CD8-positive, alpha-beta T cell (primary cell): ENCODE measurements at regions of chr12 and their contacts with region 1.

Region 1: GRCh38 chr12:123232807-123233543 is at the starts of genes MPHOSPH9 and MTRFR:
- DNase-seq: peak; percentile 96 to 100 (median 98)
- ATAC-seq: peak; percentile 90
- H3K4me3 ChIP-seq: peak within 1 kb of the TSS; percentile 98 to 99
- H3K4me3 Mint-ChIP-seq: peak within 1 kb of the TSS; percentile 94
- H3K27ac ChIP-seq: peak within 1 kb of the TSS; percentile 91 to 94
- H3K27ac Mint-ChIP-seq: peak within 1 kb of the TSS; percentile 100
- H3K4me1 ChIP-seq: peaks cover 80% of the 10 kb centered on the region
- H3K4me1 Mint-ChIP-seq: peaks cover 74% of the 10 kb centered on the region
- H3K27me3 ChIP-seq: no peaks in the 10 kb centered on the region
- H3K27me3 Mint-ChIP-seq: no peaks in the 10 kb centered on the region
- CTCF ChIP-seq: no peak
- total RNA-seq, gene MPHOSPH9: 82.2 to 84.4 TPM
- total RNA-seq, gene MTRFR: 37.7 to 39.4 TPM

Region 2: DNA sequence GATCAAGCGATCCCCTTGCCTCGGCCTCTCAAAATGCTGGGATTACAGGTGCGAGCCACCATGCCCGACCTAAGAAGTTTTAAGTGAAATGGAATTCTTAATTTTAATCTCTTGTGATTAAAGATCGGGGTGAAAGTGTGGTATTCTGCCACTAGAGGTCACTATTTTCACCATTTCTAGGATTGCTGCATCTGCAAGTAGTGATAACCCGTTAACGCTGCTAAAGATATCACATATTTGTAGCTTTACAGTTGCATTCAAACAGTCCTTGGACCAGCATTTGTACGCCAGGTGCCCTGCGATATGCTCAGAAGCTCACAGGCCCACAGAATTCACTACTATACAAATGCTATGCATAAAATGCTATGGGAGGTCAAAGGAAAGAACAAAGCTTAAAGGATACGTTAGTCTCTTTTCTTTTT is 439.3 kb before region 1 on chr12:
- CTCF ChIA-PET with region 1: interaction called, 5 read pairs
- POLR2A ChIA-PET with region 1: no interaction called
- intact Hi-C with region 1: loop called (anchors 5 kb)
- DNase-seq: peak in 4 of 9 experiments; percentile 10 to 74 (median 58)
- ATAC-seq: peak; percentile 62
- H3K4me3 ChIP-seq: no peak overlapping the region
- H3K4me3 Mint-ChIP-seq: no peak overlapping the region
- H3K27ac ChIP-seq: no peak overlapping the region
- H3K27ac Mint-ChIP-seq: no peak overlapping the region
- H3K4me1 ChIP-seq: no peaks in the 10 kb centered on the region
- H3K4me1 Mint-ChIP-seq: peaks cover 3% of the 10 kb centered on the region
- H3K27me3 ChIP-seq: no peaks in the 10 kb centered on the region
- H3K27me3 Mint-ChIP-seq: no peaks in the 10 kb centered on the region
- CTCF ChIP-seq: peak; percentile 80

Region 3: GRCh38 chr12:122974274-122974891 is 258.6 kb before region 1 on chr12:
- CTCF ChIA-PET with region 1: interaction called, 3 read pairs
- POLR2A ChIA-PET with region 1: interaction called, 32 read pairs
- intact Hi-C with region 1: loop called in 1 of 2 experiments (anchors 2 kb)
- DNase-seq: peak; percentile 97 to 100 (median 99)
- ATAC-seq: peak; percentile 85
- H3K4me3 ChIP-seq: peak overlapping the region; percentile 91 to 93
- H3K4me3 Mint-ChIP-seq: peak overlapping the region; percentile 98
- H3K27ac ChIP-seq: peak overlapping the region; percentile 93 to 97
- H3K27ac Mint-ChIP-seq: peak overlapping the region; percentile 98
- H3K4me1 ChIP-seq: peaks cover 26% of the 10 kb centered on the region
- H3K4me1 Mint-ChIP-seq: peaks cover 31% of the 10 kb centered on the region
- H3K27me3 ChIP-seq: no peaks in the 10 kb centered on the region
- H3K27me3 Mint-ChIP-seq: no peaks in the 10 kb centered on the region
- CTCF ChIP-seq: no peak

Region 4: DNA sequence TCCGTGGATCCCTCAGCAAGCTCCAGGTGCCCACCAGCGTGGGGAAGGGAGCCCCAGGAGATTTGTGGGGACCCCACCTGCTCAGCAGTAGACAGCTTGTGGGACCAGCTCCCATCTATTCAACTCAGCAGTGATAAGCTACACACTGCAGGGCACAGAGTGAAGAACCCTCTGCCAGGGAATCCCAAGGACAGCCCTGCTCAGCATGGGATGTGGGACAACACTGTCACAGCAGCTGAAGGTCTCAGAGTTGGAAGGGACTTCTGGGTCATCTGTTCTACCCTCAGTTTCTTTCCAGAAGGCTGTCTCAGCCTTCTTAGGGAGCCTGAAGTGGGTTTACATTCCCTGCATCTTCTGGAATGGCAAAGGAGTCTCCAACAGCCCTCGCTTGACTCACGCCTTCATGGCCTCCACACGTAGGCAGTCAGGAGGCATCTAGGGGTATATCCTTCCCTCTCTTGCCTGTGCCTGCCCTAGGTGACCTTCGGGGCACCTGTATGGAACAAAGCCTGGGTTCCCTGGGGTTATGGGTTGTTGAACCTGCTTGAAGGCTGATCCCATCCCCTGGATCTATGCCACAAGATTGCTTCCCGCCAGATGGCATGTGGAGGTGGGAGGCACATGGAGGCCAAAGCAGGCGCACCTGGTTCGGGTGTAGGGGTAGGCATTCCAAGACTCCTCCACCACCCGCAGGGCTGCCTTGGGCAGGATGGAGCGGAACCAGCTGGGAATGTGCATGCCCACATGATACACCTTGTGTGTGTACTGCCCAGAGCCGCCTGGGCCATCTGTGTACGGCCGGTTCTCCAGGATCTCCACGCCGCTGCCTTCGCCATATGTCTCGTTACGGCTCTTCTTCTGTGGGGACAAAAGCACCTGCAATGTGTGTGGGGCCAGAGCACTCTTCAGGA is 219.5 kb before region 1 on chr12:
- CTCF ChIA-PET with region 1: no interaction called
- POLR2A ChIA-PET with region 1: no interaction called
- intact Hi-C with region 1: no loop called
- DNase-seq: no peak
- ATAC-seq: no peak
- H3K4me3 ChIP-seq: no peak overlapping the region
- H3K4me3 Mint-ChIP-seq: no peak overlapping the region
- H3K27ac ChIP-seq: no peak overlapping the region
- H3K27ac Mint-ChIP-seq: no peak overlapping the region
- H3K4me1 ChIP-seq: no peaks in the 10 kb centered on the region
- H3K4me1 Mint-ChIP-seq: peaks cover 5% of the 10 kb centered on the region
- H3K27me3 ChIP-seq: no peaks in the 10 kb centered on the region
- H3K27me3 Mint-ChIP-seq: no peaks in the 10 kb centered on the region
- CTCF ChIP-seq: no peak

Region 5: DNA sequence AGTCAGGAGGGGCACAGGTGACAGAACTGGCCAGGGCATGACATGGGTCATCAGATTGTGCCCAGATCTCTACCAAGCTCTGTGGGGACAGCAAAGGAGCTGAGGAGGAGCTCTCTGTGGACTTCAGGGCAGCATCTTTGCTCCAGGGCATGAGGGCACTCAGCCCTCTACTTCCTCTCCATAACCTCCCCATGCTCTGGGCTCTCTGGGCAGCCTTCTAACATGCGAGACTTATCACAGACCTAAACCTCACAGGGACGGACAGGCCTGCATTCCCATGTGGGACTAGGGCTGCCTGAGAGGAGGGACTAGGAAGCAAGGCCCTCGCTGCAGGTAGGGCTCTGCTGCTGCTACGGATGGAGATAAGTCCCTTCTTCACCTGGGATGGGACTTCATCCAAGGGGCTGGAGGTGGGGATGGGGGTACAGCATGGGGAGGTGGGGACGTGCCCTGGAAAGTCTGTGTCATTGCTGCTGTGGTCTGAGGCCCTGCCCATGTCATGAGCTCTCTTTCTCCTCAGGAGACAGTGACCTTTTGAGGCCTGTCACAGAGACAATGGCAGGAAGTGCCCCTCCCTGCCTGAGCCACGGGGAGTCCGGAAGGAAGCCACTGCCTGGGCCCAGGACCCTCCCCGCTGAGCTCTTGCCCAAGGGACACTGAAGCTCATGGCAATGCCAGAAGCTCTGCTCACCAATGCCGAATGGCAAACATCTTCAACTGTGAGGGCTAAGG is 126.2 kb before region 1 on chr12:
- CTCF ChIA-PET with region 1: interaction called, 7 read pairs
- POLR2A ChIA-PET with region 1: interaction called, 11 read pairs
- intact Hi-C with region 1: no loop called
- DNase-seq: peak in 8 of 9 experiments; percentile 48 to 81 (median 60)
- ATAC-seq: peak; percentile 86
- H3K4me3 ChIP-seq: peak overlapping the region; percentile 0 to 26
- H3K4me3 Mint-ChIP-seq: peak overlapping the region; percentile 66
- H3K27ac ChIP-seq: peak overlapping the region; percentile 52 to 82
- H3K27ac Mint-ChIP-seq: peak overlapping the region; percentile 98
- H3K4me1 ChIP-seq: peaks cover 53% of the 10 kb centered on the region
- H3K4me1 Mint-ChIP-seq: peaks cover 72% of the 10 kb centered on the region
- H3K27me3 ChIP-seq: no peaks in the 10 kb centered on the region
- H3K27me3 Mint-ChIP-seq: no peaks in the 10 kb centered on the region
- CTCF ChIP-seq: no peak

Region 6: DNA sequence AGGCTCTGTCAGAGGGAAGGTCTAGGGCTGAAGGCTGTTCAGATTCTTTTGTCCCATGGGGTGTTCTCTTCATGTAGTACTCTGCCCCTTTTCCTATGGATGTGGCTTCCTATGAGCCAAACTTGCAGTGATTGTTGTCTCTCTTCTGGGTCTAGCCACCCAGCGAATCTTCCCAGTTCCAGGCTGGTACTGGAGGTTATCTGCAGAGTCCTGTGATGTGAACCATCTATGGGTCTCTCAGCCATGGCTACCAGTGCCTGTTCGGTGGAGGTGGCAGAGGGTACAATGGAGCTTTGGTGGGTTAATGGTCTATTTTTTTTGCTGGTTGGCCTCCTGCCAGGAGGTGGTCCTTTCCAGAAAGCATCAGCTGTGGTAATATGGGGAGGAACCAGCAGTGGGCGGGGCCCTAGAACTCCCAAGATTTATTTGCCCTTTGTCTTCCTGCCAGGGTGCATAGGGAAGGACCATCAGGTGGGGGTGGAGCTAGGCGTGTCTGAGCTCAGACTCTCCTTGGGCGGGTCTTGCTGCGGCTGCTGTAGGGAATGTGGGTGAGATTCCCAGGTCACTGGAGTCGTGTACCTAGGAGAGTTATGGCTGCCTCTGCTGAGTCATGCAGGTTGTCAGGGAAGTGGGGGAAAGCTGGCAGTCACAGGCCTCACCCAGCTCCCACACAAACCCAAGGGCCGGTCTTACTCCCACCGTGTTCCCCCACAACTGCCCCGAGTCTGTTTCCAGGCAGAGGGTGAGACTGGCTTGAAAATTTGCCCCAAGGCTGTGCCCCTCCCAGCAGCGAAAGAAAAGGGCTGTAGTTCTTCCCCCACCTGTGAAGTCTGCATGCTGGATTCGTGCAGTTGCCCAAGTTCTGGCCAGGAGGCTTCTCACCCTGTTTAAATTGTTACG is 17.8 kb after region 1 on chr12:
- CTCF ChIA-PET with region 1: interaction called, 3 read pairs
- POLR2A ChIA-PET with region 1: interaction called, 15 read pairs
- intact Hi-C with region 1: no loop called
- DNase-seq: no peak
- ATAC-seq: no peak
- H3K4me3 ChIP-seq: no peak overlapping the region
- H3K4me3 Mint-ChIP-seq: no peak overlapping the region
- H3K27ac ChIP-seq: no peak overlapping the region
- H3K27ac Mint-ChIP-seq: peak overlapping the region; percentile 79
- H3K4me1 ChIP-seq: peaks cover 43% of the 10 kb centered on the region
- H3K4me1 Mint-ChIP-seq: peaks cover 59% of the 10 kb centered on the region
- H3K27me3 ChIP-seq: no peaks in the 10 kb centered on the region
- H3K27me3 Mint-ChIP-seq: no peaks in the 10 kb centered on the region
- CTCF ChIP-seq: no peak

Region 7: DNA sequence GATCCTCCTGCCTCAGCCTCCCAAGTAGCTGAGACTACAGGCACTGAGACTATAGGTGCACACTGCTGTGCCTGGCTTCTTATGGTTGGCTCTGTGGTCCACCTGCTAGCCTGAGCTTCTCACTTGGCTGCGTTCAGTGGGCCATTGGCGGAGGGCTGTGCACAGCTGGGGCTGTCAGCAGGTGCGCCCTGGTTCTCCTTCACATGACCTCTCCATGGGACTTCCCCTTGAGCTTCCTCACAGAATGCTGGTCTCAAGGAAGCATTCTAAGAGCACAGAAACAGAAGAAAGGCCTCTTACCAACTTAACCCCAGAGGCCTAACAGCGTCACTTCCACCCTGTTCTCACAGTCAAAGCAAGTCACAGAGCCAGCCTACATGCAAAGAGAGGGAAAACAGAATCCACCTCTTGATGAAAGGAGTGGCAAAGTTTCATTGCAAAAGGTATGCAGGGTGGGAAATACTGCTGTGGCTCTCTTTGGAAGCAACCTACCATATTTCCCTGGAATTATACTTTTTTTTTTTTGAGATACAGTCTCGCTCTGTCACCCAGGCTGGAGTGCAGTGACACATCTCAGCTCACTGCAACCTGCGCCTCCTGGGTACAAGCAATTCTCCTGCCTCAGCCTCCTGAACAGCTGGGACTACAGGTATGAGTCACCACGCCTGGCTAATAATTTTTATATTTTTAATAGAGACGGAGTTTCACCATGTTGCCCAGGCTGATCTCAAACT is 194.2 kb after region 1 on chr12:
- CTCF ChIA-PET with region 1: no interaction called
- POLR2A ChIA-PET with region 1: no interaction called
- intact Hi-C with region 1: no loop called
- DNase-seq: peak in 3 of 9 experiments; percentile 45 to 83 (median 82)
- ATAC-seq: peak; percentile 82
- H3K4me3 ChIP-seq: no peak overlapping the region
- H3K4me3 Mint-ChIP-seq: no peak overlapping the region
- H3K27ac ChIP-seq: peak overlapping the region; percentile 18 to 77
- H3K27ac Mint-ChIP-seq: peak overlapping the region; percentile 32
- H3K4me1 ChIP-seq: peaks cover 8% of the 10 kb centered on the region
- H3K4me1 Mint-ChIP-seq: peaks cover 23% of the 10 kb centered on the region
- H3K27me3 ChIP-seq: no peaks in the 10 kb centered on the region
- H3K27me3 Mint-ChIP-seq: no peaks in the 10 kb centered on the region
- CTCF ChIP-seq: no peak

Region 8: DNA sequence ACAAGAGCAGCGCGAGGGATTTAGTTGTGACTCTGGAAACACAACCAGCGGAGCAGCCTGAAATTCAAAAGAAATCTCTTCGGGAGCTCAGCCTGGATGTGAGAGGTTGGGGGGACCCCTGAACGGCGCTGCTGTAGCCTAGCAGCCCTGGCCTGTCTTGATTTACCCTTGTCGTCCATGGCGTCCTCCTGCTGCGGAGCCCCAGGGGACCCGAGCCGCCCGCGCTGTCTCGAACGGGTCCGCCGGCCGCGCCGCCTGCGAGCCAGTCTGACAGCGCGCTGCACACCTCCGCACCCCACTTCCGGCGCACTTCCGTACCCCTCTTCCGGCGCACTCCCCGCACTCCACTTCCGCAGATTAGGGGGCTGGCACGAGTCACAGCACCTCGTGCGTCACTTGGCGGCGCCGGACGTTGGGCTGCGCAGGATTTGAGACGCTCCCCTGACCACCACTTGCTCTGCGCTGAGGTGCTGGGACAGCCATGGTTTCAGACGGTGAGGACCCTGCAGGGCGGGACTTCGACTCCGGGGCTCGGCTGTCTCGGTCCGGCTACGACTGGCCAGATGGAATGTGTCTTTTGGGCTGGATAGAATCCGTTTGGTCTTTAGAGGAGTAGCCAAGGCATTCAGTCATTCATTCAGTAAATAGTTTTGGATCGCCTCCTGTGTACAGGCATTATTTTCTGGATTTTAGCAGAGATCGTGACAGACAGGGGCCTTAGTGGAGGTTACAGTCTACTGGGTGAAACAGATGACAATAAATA is 400.6 kb after region 1 on chr12 and contains the starts of genes EIF2B1 and GTF2H3:
- CTCF ChIA-PET with region 1: no interaction called
- POLR2A ChIA-PET with region 1: no interaction called
- intact Hi-C with region 1: loop called in 1 of 2 experiments (anchors 1 kb)
- DNase-seq: peak; percentile 88 to 99 (median 97)
- ATAC-seq: peak; percentile 94
- H3K4me3 ChIP-seq: peak within 1 kb of the TSS; percentile 77 to 79
- H3K4me3 Mint-ChIP-seq: peak within 1 kb of the TSS; percentile 92
- H3K27ac ChIP-seq: peak within 1 kb of the TSS; percentile 90 to 93
- H3K27ac Mint-ChIP-seq: peak within 1 kb of the TSS; percentile 98
- H3K4me1 ChIP-seq: peaks cover 21% of the 10 kb centered on the region
- H3K4me1 Mint-ChIP-seq: peaks cover 42% of the 10 kb centered on the region
- H3K27me3 ChIP-seq: no peaks in the 10 kb centered on the region
- H3K27me3 Mint-ChIP-seq: no peaks in the 10 kb centered on the region
- CTCF ChIP-seq: no peak
- total RNA-seq, gene EIF2B1: 35.9 to 40.0 TPM
- total RNA-seq, gene GTF2H3: 11.8 to 15.2 TPM